IMR-90 (cell line): ENCODE measurements at regions of chr16 and their contacts with region 1.

Region 1: DNA sequence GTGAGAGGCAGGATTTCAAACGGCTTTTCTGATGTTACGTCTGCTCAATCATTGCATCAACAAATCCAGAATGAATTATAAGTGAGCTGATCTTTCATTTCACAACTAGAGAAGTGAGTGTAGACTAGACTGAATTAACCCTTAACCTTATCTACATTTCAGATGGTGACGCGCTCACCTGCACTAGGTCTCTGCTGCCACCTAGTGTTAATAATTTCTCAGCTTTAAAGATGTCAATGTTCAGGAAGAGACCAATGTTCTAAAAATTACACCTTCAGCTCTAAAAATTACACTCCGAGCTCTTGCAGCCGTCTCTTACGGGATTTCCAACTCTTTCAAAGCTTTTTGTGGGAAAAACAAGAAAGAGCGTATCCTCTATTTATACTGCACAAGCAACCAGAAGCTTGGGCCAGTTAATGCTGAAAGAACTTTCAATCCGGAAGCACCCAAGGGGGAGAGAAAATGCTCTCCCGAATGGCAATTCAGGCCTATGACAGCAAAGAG is 88.2 kb upstream of the FA2H start:
- DNase-seq: peak; percentile 47
- ATAC-seq: peak; percentile 86
- H3K4me3 ChIP-seq: no peak overlapping the region
- H3K27ac ChIP-seq: no peak overlapping the region
- H3K4me1 ChIP-seq: no peaks in the 10 kb centered on the region
- H3K27me3 ChIP-seq: 0 out of 2 replicates have a peak, but pooled peaks cover 2% of the 10 kb centered on the region
- CTCF ChIP-seq: peak; percentile 89
- POLR2A ChIP-seq: no peak
- RAD21 ChIP-seq: peak; percentile 90

Region 2: GRCh38 chr16:74695450-74696422 is 167.1 kb before region 1 on chr16:
- CTCF ChIA-PET with region 1: interaction called, 22 read pairs
- POLR2A ChIA-PET with region 1: no interaction called
- dilution Hi-C with region 1: no loop called
- in situ Hi-C with region 1: no loop called
- intact Hi-C with region 1: no loop called
- DNase-seq: peak; percentile 93
- ATAC-seq: peak; percentile 92
- H3K4me3 ChIP-seq: peak overlapping the region; percentile 43
- H3K27ac ChIP-seq: no peak overlapping the region
- H3K4me1 ChIP-seq: peaks cover 3% of the 10 kb centered on the region; the same call in 1 of the 2 replicates
- H3K27me3 ChIP-seq: no peaks in the 10 kb centered on the region
- CTCF ChIP-seq: no peak
- POLR2A ChIP-seq: no peak
- RAD21 ChIP-seq: no peak

Region 3: DNA sequence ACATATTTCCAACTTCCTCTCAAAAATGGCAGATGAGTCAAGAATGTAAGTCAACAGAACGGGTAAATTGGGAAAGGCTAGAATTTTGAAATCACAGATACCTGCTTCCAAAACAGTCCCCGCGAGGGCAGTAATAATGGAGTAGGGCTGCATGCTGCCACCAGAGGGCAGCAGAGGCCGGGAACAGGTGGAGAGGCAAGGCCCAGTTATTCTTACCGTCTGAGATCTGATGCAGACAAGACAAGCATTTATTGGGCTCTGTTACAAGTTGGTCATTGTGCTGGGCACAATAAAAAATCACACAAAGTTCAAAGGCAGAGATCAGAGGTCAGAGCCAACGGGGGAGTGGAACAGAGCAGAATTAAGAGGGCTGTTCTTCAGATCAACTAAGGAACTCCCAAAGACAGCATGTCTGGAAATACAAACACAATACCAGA is 153.3 kb before region 1 on chr16:
- CTCF ChIA-PET with region 1: interaction called, 36 read pairs
- POLR2A ChIA-PET with region 1: no interaction called
- dilution Hi-C with region 1: no loop called
- in situ Hi-C with region 1: no loop called
- intact Hi-C with region 1: loop called (anchors 1 kb)
- DNase-seq: peak; percentile 72
- ATAC-seq: peak; percentile 99
- H3K4me3 ChIP-seq: no peak overlapping the region
- H3K27ac ChIP-seq: no peak overlapping the region
- H3K4me1 ChIP-seq: no peaks in the 10 kb centered on the region
- H3K27me3 ChIP-seq: peaks cover 8% of the 10 kb centered on the region; the same call in 1 of the 2 replicates
- CTCF ChIP-seq: peak; percentile 98
- POLR2A ChIP-seq: 0 out of 2 replicates have a peak, but pooled peaks have one; percentile 29
- RAD21 ChIP-seq: peak; percentile 99

Region 4: DNA sequence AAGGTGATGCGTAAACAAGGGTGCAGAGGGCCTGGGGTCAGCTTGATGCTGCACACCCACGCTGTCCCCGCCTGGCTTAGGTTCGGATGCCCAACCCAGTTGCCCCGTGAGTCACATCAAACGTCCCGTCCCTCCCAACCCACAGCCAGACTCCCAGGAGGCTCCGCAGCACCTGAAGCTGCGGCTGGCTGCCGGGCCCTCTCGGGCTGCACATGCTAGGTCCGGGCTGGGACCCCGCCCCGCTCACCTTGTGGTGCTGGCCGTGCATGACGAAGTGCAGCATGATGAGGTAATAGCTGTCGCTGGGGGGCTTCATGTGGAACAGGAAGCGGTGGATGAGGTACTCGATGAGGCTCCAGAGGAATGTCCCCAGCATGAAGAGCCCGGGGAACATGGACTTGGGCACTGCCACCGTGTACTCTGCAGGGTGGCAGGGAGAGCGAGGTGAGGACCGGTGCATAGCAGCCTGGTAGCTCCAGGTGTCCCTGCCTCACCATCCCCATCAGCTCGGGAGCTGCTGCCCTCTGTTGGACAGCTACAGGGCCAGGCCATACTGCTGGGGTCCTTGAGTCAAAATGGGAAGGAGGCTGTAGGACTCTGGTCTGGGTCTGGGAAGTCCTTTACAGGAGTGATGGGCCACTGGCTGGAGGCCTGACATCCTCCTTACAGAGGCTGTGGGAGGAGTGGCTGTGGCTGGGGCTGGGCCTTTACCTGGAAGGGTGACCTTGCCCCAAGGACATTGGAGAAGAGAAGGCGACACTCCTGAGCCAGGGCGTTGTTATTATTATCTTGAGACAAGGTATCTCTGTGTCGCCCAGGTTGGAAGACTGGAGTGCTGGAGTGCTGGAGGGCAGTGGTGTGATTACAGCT is 143.8 kb before region 1 on chr16:
- CTCF ChIA-PET with region 1: interaction called, 14 read pairs
- POLR2A ChIA-PET with region 1: no interaction called
- dilution Hi-C with region 1: no loop called
- in situ Hi-C with region 1: loop called (anchors 5 kb)
- intact Hi-C with region 1: no loop called
- DNase-seq: no peak
- ATAC-seq: no peak
- H3K4me3 ChIP-seq: no peak overlapping the region
- H3K27ac ChIP-seq: no peak overlapping the region
- H3K4me1 ChIP-seq: no peaks in the 10 kb centered on the region
- H3K27me3 ChIP-seq: peaks cover 13% of the 10 kb centered on the region; the same call in 1 of the 2 replicates
- CTCF ChIP-seq: no peak
- POLR2A ChIP-seq: no peak
- RAD21 ChIP-seq: no peak

Region 5: DNA sequence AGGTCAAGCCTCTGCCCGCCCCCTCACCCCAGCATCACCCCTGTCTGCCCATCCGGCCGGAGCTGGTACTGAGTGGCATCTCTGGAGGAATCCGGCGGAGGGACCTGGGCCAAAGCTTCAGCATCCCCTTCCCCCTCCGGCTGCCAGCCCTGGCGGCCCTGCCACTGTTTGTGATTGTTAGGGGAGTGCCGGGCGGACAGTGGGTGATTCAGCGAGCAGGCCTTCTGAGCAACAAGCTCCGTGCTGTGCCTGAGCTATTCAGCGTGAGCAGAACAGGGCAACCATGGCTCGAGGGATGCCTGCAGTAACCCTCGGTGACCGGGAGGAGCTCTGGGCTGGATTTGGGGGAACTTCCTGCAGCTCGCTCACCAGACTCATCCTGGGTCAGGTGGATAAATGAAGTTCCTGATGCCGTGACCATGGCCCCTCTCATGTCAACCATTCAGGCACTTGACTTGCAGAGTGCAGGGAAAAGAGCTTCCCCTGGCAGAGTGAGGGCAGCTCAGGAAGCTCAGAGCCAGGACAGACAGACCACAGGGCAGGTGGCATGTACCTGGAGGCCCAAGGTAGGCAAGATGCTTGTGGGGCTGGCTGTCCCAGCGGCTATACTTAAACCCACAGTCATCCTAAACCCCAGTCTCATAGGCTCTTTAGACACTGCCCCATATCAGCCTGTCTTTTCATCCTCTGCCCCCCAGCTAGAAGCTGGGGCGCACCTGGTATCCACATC is 137.8 kb before region 1 on chr16:
- CTCF ChIA-PET with region 1: interaction called, 14 read pairs
- POLR2A ChIA-PET with region 1: no interaction called
- dilution Hi-C with region 1: no loop called
- in situ Hi-C with region 1: no loop called
- intact Hi-C with region 1: no loop called
- DNase-seq: peak; percentile 82
- ATAC-seq: peak; percentile 99
- H3K4me3 ChIP-seq: no peak overlapping the region
- H3K27ac ChIP-seq: no peak overlapping the region
- H3K4me1 ChIP-seq: peaks cover 10% of the 10 kb centered on the region
- H3K27me3 ChIP-seq: peaks cover 2% of the 10 kb centered on the region; the same call in 1 of the 2 replicates
- CTCF ChIP-seq: peak; percentile 44
- POLR2A ChIP-seq: no peak
- RAD21 ChIP-seq: peak; percentile 38

Region 6: GRCh38 chr16:74813109-74813641 is 49.6 kb before region 1 on chr16:
- CTCF ChIA-PET with region 1: interaction called, 24 read pairs
- POLR2A ChIA-PET with region 1: no interaction called
- dilution Hi-C with region 1: no loop called
- in situ Hi-C with region 1: no loop called
- intact Hi-C with region 1: loop called (anchors 1 kb)
- DNase-seq: peak; percentile 55
- ATAC-seq: peak; percentile 100
- H3K4me3 ChIP-seq: no peak overlapping the region
- H3K27ac ChIP-seq: no peak overlapping the region
- H3K4me1 ChIP-seq: no peaks in the 10 kb centered on the region
- H3K27me3 ChIP-seq: peaks cover 26% of the 10 kb centered on the region
- CTCF ChIP-seq: peak; percentile 82
- POLR2A ChIP-seq: no peak
- RAD21 ChIP-seq: peak; percentile 82

Region 7: DNA sequence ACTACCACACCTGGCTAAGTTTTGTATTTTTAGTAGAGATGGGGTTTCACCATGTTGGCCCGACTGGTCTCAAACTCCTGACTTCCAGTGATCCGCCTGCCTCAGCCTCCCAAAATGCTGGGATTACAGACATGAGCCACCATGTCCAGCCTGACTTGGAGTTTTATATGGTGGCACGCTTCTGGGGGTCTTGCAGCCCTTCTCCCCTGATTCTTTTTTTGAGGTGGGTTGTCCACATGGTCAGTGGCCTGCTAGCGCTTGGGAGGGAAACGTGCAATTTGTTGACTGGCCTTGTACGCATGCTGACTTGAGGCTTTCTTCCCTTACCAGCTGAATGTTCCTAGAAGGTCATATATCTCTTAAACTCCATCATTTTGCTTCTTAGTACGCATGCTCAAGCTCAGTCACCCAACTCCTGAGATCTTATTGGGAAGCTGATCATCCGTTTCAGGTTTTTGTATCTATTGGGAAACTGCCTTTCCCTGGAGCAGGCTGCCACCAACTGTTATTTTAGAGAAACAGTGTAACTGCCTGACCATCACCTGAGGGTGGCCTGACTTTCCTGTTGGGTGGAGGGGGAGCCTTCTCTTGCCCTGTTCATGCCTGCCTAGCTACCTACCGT is 267.5 kb after region 1 on chr16:
- CTCF ChIA-PET with region 1: no interaction called
- POLR2A ChIA-PET with region 1: no interaction called
- dilution Hi-C with region 1: no loop called
- in situ Hi-C with region 1: no loop called
- intact Hi-C with region 1: no loop called
- DNase-seq: no peak
- ATAC-seq: no peak
- H3K4me3 ChIP-seq: no peak overlapping the region
- H3K27ac ChIP-seq: no peak overlapping the region
- H3K4me1 ChIP-seq: no peaks in the 10 kb centered on the region
- H3K27me3 ChIP-seq: peaks cover 3% of the 10 kb centered on the region; the same call in 1 of the 2 replicates
- CTCF ChIP-seq: no peak; the same call in 1 of the 2 replicates
- POLR2A ChIP-seq: no peak
- RAD21 ChIP-seq: peak; percentile 24; the same call in 1 of the 2 replicates